ENCODE measurements at regions of chrX and their contacts with region 1.

Region 1: GRCh38 chrX:119791438-119792231 is at the start of gene RPL39:
- DNase-seq: peak; percentile 88
- ATAC-seq: peak; percentile 92
- H3K4me3 Mint-ChIP-seq: peak within 1 kb of the TSS; percentile 92
- H3K27ac Mint-ChIP-seq: peak within 1 kb of the TSS; percentile 93
- H3K4me1 Mint-ChIP-seq: peaks cover 21% of the 10 kb centered on the region
- H3K27me3 Mint-ChIP-seq: no peaks in the 10 kb centered on the region
- total RNA-seq, gene RPL39: 1,382 to 2,556 TPM

Region 2: GRCh38 chrX:119468930-119469635 is 322.6 kb before region 1 on chrX:
- CTCF ChIA-PET with region 1: no interaction called
- POLR2A ChIA-PET with region 1: interaction called, 3 read pairs
- intact Hi-C with region 1: loop called in 1 of 2 experiments (anchors 1 kb)
- DNase-seq: peak; percentile 94
- ATAC-seq: peak; percentile 78
- H3K4me3 Mint-ChIP-seq: peak overlapping the region; percentile 85
- H3K27ac Mint-ChIP-seq: peak overlapping the region; percentile 86
- H3K4me1 Mint-ChIP-seq: peaks cover 12% of the 10 kb centered on the region
- H3K27me3 Mint-ChIP-seq: no peaks in the 10 kb centered on the region

Region 3: GRCh38 chrX:119693040-119693995 is 98.3 kb before region 1 on chrX and contains the start of gene SEPTIN6:
- CTCF ChIA-PET with region 1: no interaction called
- POLR2A ChIA-PET with region 1: interaction called, 7 read pairs
- intact Hi-C with region 1: loop called in 1 of 2 experiments (anchors 1 kb)
- DNase-seq: peak; percentile 90
- ATAC-seq: peak; percentile 53
- H3K4me3 Mint-ChIP-seq: peak within 1 kb of the TSS; percentile 98
- H3K27ac Mint-ChIP-seq: peak within 1 kb of the TSS; percentile 98
- H3K4me1 Mint-ChIP-seq: peaks cover 3% of the 10 kb centered on the region
- H3K27me3 Mint-ChIP-seq: no peaks in the 10 kb centered on the region
- total RNA-seq, gene SEPTIN6: 183 to 233 TPM

Region 4: DNA sequence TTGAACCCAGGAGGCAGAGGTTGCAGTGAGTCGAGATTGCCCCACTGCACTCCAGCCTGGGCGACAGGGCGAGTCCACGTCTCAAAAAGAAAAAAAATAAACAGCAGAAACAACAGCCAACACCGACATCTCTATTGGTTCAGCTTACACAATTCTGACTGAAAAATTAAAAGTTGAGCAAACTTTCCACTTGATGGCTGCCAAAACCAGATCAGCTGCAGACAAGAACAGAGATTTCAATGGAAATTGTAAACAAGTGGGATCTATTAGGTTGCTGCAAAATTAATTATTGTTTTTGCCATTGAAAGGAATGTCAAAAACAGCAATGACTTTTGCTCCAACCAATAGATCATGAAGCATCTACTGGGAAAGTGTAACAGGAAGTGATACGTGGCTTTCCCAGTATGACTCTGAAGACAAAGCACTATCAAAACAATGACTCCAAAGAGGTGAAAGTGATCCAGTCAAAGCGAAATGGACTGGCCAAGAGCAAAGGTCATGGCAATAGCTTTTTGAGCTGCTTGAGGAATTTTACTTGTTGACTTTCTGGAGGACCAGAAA is 34.8 kb after region 1 on chrX:
- CTCF ChIA-PET with region 1: interaction called, 8 read pairs
- POLR2A ChIA-PET with region 1: interaction called, 6 read pairs
- intact Hi-C with region 1: loop called (anchors 5 kb)
- DNase-seq: peak; percentile 24
- ATAC-seq: peak; percentile 77
- H3K4me3 Mint-ChIP-seq: no peak overlapping the region
- H3K27ac Mint-ChIP-seq: peak overlapping the region; percentile 19
- H3K4me1 Mint-ChIP-seq: peaks cover 17% of the 10 kb centered on the region
- H3K27me3 Mint-ChIP-seq: no peaks in the 10 kb centered on the region

Region 5: DNA sequence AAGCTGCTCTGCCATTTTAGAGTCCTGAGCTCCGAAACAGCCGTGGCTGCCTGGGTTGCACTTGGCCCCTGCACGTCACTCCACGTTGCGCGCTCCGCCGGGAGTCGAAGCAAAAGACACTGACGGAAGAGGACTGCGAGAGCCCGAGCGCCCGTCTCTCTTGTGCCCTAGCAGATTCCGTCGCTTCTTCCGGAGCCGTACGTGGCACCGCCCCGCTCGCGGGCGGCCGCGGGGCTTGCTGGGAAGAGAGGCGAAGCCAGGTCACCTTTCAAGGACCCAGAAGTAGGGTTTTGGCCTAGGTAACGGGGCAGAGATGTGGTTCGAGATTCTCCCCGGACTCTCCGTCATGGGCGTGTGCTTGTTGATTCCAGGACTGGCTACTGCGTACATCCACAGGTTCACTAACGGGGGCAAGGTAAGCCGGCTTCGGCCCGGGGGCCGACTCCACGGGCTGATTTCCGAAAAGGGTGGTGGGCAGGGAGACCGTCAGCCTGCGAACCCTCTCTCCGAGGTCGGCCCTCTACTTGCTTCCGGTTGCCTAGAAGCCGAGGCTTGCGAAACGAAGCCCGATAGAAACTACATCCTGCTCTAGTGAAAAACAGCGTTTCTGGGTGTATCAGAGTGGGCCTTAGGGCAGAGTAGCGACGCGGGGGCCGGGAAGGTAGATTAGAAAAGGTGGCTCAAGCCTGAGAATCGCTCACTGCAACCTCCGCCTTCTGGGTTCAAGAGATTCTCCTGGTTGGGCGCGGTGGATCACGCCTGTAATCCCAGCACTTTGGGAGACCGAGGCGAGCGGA is 80.2 kb after region 1 on chrX and contains the starts of genes NDUFA1 and RNF113A:
- CTCF ChIA-PET with region 1: interaction called, 3 read pairs
- POLR2A ChIA-PET with region 1: interaction called, 21 read pairs
- intact Hi-C with region 1: loop called (anchors 1 kb)
- DNase-seq: peak; percentile 91
- ATAC-seq: peak; percentile 93
- H3K4me3 Mint-ChIP-seq: peak within 1 kb of the TSS; percentile 100
- H3K27ac Mint-ChIP-seq: peak within 1 kb of the TSS; percentile 99
- H3K4me1 Mint-ChIP-seq: peaks cover 14% of the 10 kb centered on the region
- H3K27me3 Mint-ChIP-seq: no peaks in the 10 kb centered on the region
- total RNA-seq, gene NDUFA1: 37.6 to 101 TPM
- total RNA-seq, gene RNF113A: 26.9 to 29.9 TPM

Region 6: DNA sequence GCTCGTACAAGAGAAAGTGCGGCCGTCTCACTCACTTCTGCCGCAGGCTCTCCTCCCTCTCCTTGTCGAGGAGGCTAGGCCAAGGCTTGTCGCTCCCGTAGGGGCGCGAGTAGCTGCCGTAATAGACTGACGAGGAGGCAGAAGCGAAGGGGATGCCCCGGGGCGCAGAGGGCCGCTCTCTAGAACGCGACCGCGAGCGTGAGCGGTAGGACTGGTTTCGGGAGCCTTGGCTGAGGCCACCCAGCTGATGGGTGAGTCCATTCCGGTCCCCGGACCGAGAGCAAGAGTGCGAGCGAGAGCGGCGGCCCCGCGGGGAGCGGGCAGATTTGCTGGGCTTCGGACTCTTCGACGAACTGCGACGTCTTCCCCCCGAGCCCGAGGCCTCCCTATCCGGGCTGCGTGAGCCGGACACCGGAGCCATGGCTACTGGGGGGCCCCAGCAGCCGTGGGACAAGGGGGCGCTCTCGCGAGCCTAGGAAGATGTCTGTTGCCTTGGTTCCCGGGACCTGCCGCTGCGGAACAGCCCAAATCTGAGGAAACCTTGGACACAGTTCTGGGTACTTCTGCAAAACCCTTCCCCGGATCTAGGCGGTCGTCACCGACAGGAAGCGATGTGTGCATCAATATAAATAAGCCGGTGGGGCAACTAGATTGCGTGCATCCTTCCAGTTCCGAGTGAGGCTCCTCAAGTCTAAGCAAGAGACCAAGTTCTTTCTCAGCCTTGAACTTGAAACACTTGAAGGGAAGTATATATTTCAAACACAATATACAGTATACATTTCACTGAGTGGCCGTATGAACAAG is 151.8 kb after region 1 on chrX and contains the start of gene NKAP:
- CTCF ChIA-PET with region 1: no interaction called
- POLR2A ChIA-PET with region 1: interaction called, 8 read pairs
- intact Hi-C with region 1: loop called in 1 of 2 experiments (anchors 1 kb)
- DNase-seq: peak; percentile 84
- ATAC-seq: peak; percentile 89
- H3K4me3 Mint-ChIP-seq: peak within 1 kb of the TSS; percentile 99
- H3K27ac Mint-ChIP-seq: peak within 1 kb of the TSS; percentile 98
- H3K4me1 Mint-ChIP-seq: peaks cover 20% of the 10 kb centered on the region
- H3K27me3 Mint-ChIP-seq: peaks cover under 1% of the 10 kb centered on the region
- total RNA-seq, gene NKAP: 11.8 to 12.2 TPM